T-cell (primary cell): ENCODE measurements at regions of chr20 and their contacts with region 1.

Region 1: GRCh38 chr20:35541783-35542588 is at the start of gene ERGIC3:
- DNase-seq: peak; percentile 88 to 98 (median 94)
- ATAC-seq: peak; percentile 98 to 99 (median 99)
- H3K4me3 ChIP-seq: peak within 1 kb of the TSS; percentile 81 to 83
- H3K4me3 Mint-ChIP-seq: peak within 1 kb of the TSS; percentile 83 to 88 (median 86)
- H3K27ac ChIP-seq: peak within 1 kb of the TSS; percentile 73
- H3K27ac Mint-ChIP-seq: peak within 1 kb of the TSS; percentile 75 to 82
- H3K4me1 ChIP-seq: peaks cover 3 to 16% of the 10 kb centered on the region in 2 experiments
- H3K4me1 Mint-ChIP-seq: peaks cover 17 to 26% (median 25%) of the 10 kb centered on the region in 3 donors
- H3K27me3 ChIP-seq: no peaks in the 10 kb centered on the region
- H3K27me3 Mint-ChIP-seq: no peaks in the 10 kb centered on the region
- total RNA-seq, gene ERGIC3: 135 to 180 (median 166) TPM

Region 2: GRCh38 chr20:35607003-35607750 is 65.2 kb after region 1 on chr20:
- CTCF ChIA-PET with region 1: interaction called in 1 of 2 experiments, 3 read pairs
- POLR2A ChIA-PET with region 1: interaction called in 1 of 2 experiments, 13 read pairs
- DNase-seq: no peak
- ATAC-seq: no peak
- H3K4me3 ChIP-seq: no peak overlapping the region
- H3K4me3 Mint-ChIP-seq: no peak overlapping the region
- H3K27ac ChIP-seq: no peak overlapping the region
- H3K27ac Mint-ChIP-seq: no peak overlapping the region
- H3K4me1 ChIP-seq: peaks cover 0 to 2% of the 10 kb centered on the region in 2 experiments
- H3K4me1 Mint-ChIP-seq: peaks cover 0 to 4% (median 0%) of the 10 kb centered on the region in 3 donors
- H3K27me3 ChIP-seq: peaks cover 0 to 27% of the 10 kb centered on the region in 2 experiments
- H3K27me3 Mint-ChIP-seq: no peaks in the 10 kb centered on the region

Region 3: DNA sequence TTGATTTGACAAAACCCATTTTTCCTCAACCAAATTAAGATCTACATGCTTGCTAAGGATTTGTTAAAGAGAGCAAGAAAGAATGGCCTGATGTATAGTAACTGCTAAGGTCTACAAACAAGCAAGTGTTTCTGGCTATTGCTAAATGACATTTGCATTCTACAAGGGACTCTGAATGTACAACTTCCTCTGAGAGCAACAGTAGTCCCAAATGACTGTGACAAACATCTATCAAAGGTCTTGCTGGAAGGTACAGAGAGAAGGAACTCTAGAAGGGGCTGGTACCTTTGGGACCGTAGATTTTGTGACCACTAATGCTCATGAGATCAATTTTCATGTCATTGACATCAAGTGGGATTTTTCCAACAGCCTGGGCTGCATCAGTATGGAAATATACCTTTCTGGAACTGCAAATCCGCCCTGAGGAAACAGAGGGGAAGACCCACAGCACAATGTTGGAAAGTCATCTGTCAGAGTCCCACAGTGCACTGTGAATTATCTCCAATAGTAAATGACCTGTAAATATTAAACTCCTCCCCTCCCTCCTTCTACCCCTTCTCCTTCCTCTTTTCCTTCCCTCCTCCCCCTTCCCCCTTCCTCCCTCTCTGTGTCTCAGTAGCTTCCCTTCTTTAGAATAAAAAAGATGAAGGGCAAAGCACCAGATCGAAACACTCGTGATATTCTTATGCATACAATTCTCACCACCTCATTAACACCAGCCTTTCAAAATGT is 138.6 kb after region 1 on chr20:
- CTCF ChIA-PET with region 1: no interaction called
- POLR2A ChIA-PET with region 1: interaction called in 1 of 2 experiments, 19 read pairs
- DNase-seq: no peak
- ATAC-seq: no peak
- H3K4me3 ChIP-seq: no peak overlapping the region
- H3K4me3 Mint-ChIP-seq: no peak overlapping the region
- H3K27ac ChIP-seq: no peak overlapping the region
- H3K27ac Mint-ChIP-seq: no peak overlapping the region
- H3K4me1 ChIP-seq: peaks cover 0 to 2% of the 10 kb centered on the region in 2 experiments
- H3K4me1 Mint-ChIP-seq: peaks cover 0 to 2% (median 0%) of the 10 kb centered on the region in 3 donors
- H3K27me3 ChIP-seq: no peaks in the 10 kb centered on the region
- H3K27me3 Mint-ChIP-seq: no peaks in the 10 kb centered on the region

Region 4: GRCh38 chr20:37142708-37143107 is 1600.7 kb after region 1 on chr20:
- CTCF ChIA-PET with region 1: no interaction called
- POLR2A ChIA-PET with region 1: no interaction called
- DNase-seq: no peak
- ATAC-seq: no peak
- H3K4me3 ChIP-seq: no peak overlapping the region
- H3K4me3 Mint-ChIP-seq: no peak overlapping the region
- H3K27ac ChIP-seq: no peak overlapping the region
- H3K27ac Mint-ChIP-seq: no peak overlapping the region
- H3K4me1 ChIP-seq: no peaks in the 10 kb centered on the region
- H3K4me1 Mint-ChIP-seq: no peaks in the 10 kb centered on the region
- H3K27me3 ChIP-seq: no peaks in the 10 kb centered on the region
- H3K27me3 Mint-ChIP-seq: no peaks in the 10 kb centered on the region